ENCODE measurements at regions of chr15 and their contacts with region 1.

Region 1: DNA sequence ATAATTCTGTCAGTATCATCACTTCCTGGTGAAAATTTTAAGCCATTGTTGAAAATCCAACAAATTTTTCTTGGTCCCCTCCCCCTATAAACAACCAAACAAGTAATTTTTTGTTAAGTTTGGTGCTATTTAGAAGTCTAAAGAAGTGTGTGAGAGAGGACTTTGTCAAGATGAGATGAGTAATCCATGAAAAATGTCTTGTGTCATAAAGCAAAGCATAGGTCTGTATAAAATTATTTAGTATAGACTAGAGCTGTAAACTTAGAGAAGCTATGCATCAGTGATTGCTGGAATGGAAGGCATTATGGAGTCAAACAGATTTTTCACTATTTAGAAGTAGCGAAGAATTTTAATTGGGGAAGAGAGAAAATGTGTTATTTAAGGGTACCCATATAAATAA is 31.4 kb downstream of the MAPK6 start:
- DNase-seq: no peak
- ATAC-seq: no peak
- H3K4me3 Mint-ChIP-seq: no peak overlapping the region
- H3K27ac Mint-ChIP-seq: no peak overlapping the region
- H3K4me1 Mint-ChIP-seq: peaks cover 19% of the 10 kb centered on the region
- H3K27me3 Mint-ChIP-seq: no peaks in the 10 kb centered on the region
- CTCF ChIP-seq: no peak

Region 2: DNA sequence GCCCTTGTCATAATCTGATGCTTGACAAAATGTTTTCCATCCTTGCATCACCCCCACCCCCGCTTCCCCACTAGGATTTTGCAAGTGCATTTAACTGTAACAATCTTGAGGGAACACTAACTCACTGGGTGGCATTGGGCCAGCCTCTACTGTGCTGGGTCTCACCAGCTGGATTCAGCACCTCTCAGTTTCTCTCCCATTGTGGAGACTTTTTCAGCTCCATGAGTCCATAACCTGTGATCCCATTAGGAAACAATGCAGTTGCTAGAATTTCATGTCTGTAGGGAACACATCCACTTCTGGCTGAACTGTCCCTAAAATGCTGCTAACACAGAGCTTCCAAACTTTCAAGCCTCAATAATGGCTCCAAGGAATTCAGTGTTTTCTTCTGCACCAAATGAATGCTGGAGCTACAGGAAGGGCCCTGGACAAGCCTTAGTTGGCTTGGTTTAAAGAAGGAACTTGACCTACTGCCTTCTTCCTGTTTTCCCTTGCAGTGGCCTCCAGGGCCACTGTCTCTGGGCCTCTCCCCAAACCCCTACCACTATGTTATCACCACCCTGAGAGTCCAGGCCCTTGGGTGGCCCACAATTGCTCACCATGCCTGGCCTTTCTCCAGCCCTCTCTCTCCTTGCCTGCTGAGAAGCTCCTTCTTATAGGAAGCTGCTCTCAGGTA is 727.7 kb before region 1 on chr15:
- CTCF ChIA-PET with region 1: no interaction called
- POLR2A ChIA-PET with region 1: no interaction called
- intact Hi-C with region 1: no loop called
- DNase-seq: no peak
- ATAC-seq: no peak
- H3K4me3 Mint-ChIP-seq: no peak overlapping the region
- H3K27ac Mint-ChIP-seq: no peak overlapping the region
- H3K4me1 Mint-ChIP-seq: no peaks in the 10 kb centered on the region
- H3K27me3 Mint-ChIP-seq: no peaks in the 10 kb centered on the region
- CTCF ChIP-seq: no peak

Region 3: GRCh38 chr15:51947124-51947523 is 103.3 kb before region 1 on chr15:
- CTCF ChIA-PET with region 1: no interaction called
- POLR2A ChIA-PET with region 1: no interaction called
- intact Hi-C with region 1: no loop called
- DNase-seq: no peak
- ATAC-seq: no peak
- H3K4me3 Mint-ChIP-seq: no peak overlapping the region
- H3K27ac Mint-ChIP-seq: peak overlapping the region; percentile 62
- H3K4me1 Mint-ChIP-seq: peaks cover 7% of the 10 kb centered on the region
- H3K27me3 Mint-ChIP-seq: no peaks in the 10 kb centered on the region
- CTCF ChIP-seq: no peak

Region 4: GRCh38 chr15:52068004-52068615 is 17.7 kb after region 1 on chr15:
- CTCF ChIA-PET with region 1: interaction called, 10 read pairs
- POLR2A ChIA-PET with region 1: no interaction called
- intact Hi-C with region 1: no loop called
- DNase-seq: no peak
- ATAC-seq: no peak
- H3K4me3 Mint-ChIP-seq: no peak overlapping the region
- H3K27ac Mint-ChIP-seq: no peak overlapping the region
- H3K4me1 Mint-ChIP-seq: peaks cover 15% of the 10 kb centered on the region
- H3K27me3 Mint-ChIP-seq: no peaks in the 10 kb centered on the region
- CTCF ChIP-seq: no peak

Region 5: DNA sequence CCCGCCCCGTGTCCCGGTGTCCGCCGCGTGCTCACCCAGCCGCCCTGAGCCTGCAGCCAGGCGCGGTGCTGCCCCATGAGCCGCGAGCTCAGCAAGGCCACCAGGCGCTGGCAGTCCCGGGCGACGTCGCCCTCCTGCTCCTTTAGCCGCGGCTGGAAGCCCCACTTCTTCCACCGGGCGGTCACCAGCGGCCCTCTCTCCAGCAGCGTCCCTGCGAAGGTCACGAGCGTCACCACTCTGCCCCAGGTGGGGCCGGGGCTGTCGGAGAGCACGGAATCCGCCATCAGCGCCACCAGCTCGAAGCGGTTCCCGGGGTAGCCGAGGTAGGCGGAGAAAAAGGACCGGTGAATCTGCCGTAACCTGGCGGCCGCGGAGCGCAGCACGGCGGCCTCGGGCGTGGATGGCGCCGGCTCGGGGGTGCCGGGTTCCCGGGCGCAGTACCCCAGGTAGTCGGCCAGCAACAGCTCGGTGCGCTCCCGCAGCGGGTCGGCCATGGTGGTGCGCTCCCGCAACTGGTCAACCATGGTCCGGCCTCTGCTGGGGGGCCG is 61.9 kb after region 1 on chr15:
- CTCF ChIA-PET with region 1: no interaction called
- POLR2A ChIA-PET with region 1: no interaction called
- intact Hi-C with region 1: no loop called
- DNase-seq: peak; percentile 54
- ATAC-seq: peak; percentile 87
- H3K4me3 Mint-ChIP-seq: peak overlapping the region; percentile 64
- H3K27ac Mint-ChIP-seq: no peak overlapping the region
- H3K4me1 Mint-ChIP-seq: peaks cover 7% of the 10 kb centered on the region
- H3K27me3 Mint-ChIP-seq: peaks cover 29% of the 10 kb centered on the region
- CTCF ChIP-seq: peak; percentile 13